Psoas muscle (tissue), 8 donors: ENCODE measurements at regions of chr3 and their contacts with region 1.

Region 1: DNA sequence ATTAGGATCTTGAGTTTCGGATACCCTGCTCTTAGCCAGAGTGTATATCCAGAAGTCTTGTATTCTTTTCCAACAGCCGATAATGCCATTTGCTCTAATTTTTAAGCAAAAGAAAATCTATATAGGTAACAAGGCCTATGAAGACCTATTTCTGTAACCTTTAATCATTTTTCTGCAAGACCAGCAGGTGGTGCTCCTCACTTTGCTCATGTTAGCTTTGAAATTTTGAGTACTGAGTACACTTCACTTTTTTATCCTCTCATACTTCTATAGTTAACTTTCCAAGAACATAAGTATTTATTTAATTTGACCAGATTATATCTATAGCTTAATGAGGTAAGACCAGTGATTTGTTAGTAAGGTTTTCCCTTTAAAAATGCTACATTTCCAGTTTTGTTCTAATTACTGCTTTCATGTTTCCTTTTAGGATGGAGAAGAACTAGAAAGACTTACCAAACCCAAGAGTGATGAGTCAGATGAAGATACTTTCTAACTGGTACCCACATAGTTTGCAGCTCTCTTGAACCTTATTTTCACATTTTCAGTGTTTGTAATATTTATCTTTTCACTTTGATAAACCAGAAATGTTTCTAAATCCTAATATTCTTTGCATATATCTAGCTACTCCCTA is 20.5 kb downstream of the SLC35A5 start:
- DNase-seq: no peak
- ATAC-seq: no peak
- H3K4me3 ChIP-seq: no peak overlapping the region
- H3K27ac ChIP-seq: no peak overlapping the region
- H3K4me1 ChIP-seq: no peaks in the 10 kb centered on the region
- H3K27me3 ChIP-seq: no peaks in the 10 kb centered on the region
- CTCF ChIP-seq: peak; percentile 48

Region 2: DNA sequence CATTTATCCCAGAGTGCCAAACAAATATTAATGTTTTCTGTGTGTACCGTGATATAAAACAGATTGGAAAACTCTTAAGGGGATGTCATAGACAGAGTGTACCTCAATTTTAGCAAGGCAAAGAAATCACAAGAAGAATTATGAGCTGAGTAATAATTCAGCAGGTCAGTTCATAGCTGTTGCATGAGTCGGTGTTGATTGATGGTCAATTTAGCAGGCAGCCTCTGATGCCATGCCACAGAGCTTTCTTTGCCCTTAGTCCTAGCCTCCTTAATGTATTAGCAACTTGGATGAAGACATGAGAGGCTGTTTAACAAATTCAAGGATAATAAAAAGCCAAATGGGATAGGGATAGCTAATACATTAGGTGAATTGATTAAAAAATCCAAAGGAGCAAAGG is 13.7 kb before region 1 on chr3:
- intact Hi-C with region 1: loop called in 1 of 2 experiments (anchors 1 kb)
- DNase-seq: no peak
- ATAC-seq: peak in 1 of 4 donors; percentile 68
- H3K4me3 ChIP-seq: no peak overlapping the region
- H3K27ac ChIP-seq: no peak overlapping the region
- H3K4me1 ChIP-seq: no peaks in the 10 kb centered on the region
- H3K27me3 ChIP-seq: no peaks in the 10 kb centered on the region
- CTCF ChIP-seq: no peak

Region 3: GRCh38 chr3:112619295-112619694 is 36.9 kb after region 1 on chr3:
- intact Hi-C with region 1: no loop called
- DNase-seq: no peak
- ATAC-seq: no peak
- H3K4me3 ChIP-seq: no peak overlapping the region
- H3K27ac ChIP-seq: no peak overlapping the region
- H3K4me1 ChIP-seq: no peaks in the 10 kb centered on the region
- H3K27me3 ChIP-seq: no peaks in the 10 kb centered on the region
- CTCF ChIP-seq: no peak